Mammary epithelial cell (primary cell): ENCODE measurements at regions of chr9 and their contacts with region 1.

Region 1: DNA sequence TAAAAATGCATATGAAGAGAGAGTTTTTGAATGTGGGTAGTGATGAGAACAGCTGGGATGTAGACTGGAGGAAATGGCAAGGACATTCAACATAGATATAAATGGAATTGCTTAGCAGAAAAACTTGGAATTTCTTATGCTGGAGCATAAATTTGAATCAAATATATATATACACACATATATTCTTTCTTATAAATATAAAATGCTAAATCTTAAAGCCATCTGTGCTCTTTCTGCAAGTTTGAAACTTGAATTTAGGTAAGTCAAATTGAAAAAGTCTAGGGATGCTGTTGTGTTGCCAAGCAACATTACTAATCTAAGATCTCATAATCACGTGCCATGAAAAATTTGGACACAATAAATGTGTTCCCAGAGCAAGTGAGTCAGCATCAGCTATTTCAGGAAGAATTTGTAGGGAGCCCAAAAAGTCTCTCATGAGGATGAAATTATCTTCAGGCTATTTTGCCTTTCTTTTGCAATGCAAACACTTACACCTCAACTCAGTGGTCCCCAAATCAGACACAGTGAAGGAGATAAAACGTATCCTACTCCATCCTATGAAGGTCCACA is 58.4 kb upstream of the ALDH1A1 start:
- DNase-seq: no peak
- H3K4me3 ChIP-seq: no peak overlapping the region
- H3K27ac ChIP-seq: no peak overlapping the region
- H3K4me1 ChIP-seq: no peaks in the 10 kb centered on the region
- H3K27me3 ChIP-seq: no peaks in the 10 kb centered on the region
- CTCF ChIP-seq: no peak

Region 2: DNA sequence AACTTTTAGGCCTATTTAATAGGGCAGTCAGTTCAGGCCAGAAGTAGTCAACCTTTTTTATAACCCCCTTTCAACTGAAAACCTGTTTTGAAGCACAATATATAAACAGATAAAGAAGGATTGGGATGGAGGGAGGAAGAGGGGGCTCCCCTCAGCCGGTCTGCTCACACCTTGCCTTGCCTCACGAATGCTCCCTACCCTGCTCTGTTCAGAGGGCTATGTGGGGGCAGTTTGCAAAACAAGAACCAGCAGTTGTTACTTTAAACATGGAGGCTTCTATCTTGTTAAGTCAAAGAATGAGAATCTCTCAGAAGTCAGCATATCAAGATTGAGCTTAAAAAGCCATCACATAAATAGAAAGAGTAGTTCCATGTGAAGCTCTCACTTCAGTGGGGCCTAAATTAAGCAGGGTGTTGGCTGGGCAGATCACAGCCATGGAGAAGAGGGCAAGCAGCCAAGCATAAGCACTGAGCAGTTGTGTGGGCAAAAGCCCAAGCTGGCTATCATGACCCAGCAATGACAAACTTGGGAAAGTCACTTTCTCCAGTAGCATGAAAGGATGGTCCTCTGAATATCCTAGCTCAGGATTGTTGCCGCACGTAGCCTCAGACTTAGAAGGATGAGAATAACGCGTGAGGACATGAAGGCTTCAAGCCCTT is 129.0 kb before region 1 on chr9:
- CTCF ChIA-PET with region 1: no interaction called
- dilution Hi-C with region 1: no loop called
- in situ Hi-C with region 1: loop called in 1 of 2 experiments (anchors 10 kb)
- intact Hi-C with region 1: no loop called
- DNase-seq: no peak
- H3K4me3 ChIP-seq: no peak overlapping the region
- H3K27ac ChIP-seq: no peak overlapping the region
- H3K4me1 ChIP-seq: peaks cover under 1% of the 10 kb centered on the region
- H3K27me3 ChIP-seq: no peaks in the 10 kb centered on the region
- CTCF ChIP-seq: no peak

Region 3: DNA sequence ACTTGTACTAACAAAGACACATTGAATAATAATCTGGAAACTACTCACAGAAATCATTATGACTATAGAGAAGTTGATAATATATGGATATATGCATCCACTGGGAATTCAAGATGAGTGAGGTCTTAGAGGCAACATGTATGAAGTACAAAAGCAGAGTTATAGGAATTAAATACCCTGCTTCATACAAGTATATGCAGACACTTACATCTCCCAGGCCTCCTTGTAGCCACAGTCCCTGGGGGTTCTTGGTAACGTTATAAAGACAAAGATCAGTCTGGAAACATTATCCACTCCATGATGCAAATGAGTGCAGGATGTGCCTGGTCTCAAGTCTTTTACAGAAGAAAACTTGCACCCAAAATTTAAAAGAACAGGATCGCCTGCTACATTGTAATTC is 48.0 kb after region 1 on chr9:
- CTCF ChIA-PET with region 1: no interaction called
- dilution Hi-C with region 1: no loop called
- in situ Hi-C with region 1: no loop called
- intact Hi-C with region 1: no loop called
- DNase-seq: no peak
- H3K4me3 ChIP-seq: no peak overlapping the region
- H3K27ac ChIP-seq: no peak overlapping the region
- H3K4me1 ChIP-seq: no peaks in the 10 kb centered on the region
- H3K27me3 ChIP-seq: peaks cover under 1% of the 10 kb centered on the region
- CTCF ChIP-seq: no peak